Heart left ventricle (tissue), 16 donors: ENCODE measurements at regions of chr10 and their contacts with region 1.

Region 1: DNA sequence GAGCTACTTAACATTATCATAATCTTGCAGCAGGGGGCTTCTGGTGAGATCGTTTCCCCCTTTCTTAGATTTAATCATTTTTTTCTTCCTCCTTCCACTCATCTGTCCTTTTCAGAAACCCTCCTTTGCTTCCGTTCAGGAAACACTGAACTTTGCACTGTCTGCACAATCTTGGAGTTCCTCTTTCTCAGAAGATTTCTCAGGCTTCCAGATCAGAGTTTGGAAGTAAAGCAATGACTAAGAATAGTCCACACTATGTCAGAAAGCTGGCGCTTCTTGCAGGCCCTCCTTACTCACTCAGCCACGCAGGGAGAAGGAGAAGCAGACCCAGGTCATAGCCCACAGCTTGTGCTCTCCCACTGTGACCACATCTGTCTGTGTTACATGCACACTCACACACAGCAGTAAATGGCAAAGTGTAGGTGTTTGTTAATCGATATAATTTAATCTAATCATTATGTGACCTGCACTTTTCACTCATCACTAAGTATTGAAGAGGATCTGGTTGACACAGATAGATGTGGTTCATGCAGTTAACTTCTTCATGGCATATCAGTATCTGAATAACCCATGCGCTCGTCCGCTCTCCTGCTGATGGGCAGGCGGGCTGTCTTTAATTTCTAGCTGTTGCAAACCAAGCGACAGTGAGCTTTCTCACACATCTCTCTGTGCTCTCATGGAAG is 30.2 kb downstream of the ALOX5 start:
- DNase-seq: peak in 1 of 5 donors; percentile 33
- ATAC-seq: peak in 3 of 4 donors; percentile 61 to 90 (median 88)
- H3K4me3 ChIP-seq: no peak overlapping the region
- H3K27ac ChIP-seq: peak overlapping the region in 2 of 12 donors; percentile 18 to 80
- H3K4me1 ChIP-seq: peaks cover 0 to 40% (median 0%) of the 10 kb centered on the region in 12 donors
- H3K27me3 ChIP-seq: peaks cover 0 to 14% (median 0%) of the 10 kb centered on the region in 9 donors
- CTCF ChIP-seq: no peak
- POLR2A ChIP-seq: no peak

Region 2: GRCh38 chr10:45280113-45280760 is 124.0 kb before region 1 on chr10:
- intact Hi-C with region 1: loop called in 1 of 10 experiments (anchors 10 kb)
- DNase-seq: peak in 1 of 5 donors; percentile 10
- ATAC-seq: peak in 3 of 4 donors; percentile 20 to 83 (median 71)
- H3K4me3 ChIP-seq: no peak overlapping the region
- H3K27ac ChIP-seq: peak overlapping the region in 1 of 12 donors; percentile 9
- H3K4me1 ChIP-seq: peaks cover 0 to 15% (median 0%) of the 10 kb centered on the region in 12 donors
- H3K27me3 ChIP-seq: peaks cover 0 to 4% (median 0%) of the 10 kb centered on the region in 9 donors
- CTCF ChIP-seq: no peak
- POLR2A ChIP-seq: no peak

Region 3: DNA sequence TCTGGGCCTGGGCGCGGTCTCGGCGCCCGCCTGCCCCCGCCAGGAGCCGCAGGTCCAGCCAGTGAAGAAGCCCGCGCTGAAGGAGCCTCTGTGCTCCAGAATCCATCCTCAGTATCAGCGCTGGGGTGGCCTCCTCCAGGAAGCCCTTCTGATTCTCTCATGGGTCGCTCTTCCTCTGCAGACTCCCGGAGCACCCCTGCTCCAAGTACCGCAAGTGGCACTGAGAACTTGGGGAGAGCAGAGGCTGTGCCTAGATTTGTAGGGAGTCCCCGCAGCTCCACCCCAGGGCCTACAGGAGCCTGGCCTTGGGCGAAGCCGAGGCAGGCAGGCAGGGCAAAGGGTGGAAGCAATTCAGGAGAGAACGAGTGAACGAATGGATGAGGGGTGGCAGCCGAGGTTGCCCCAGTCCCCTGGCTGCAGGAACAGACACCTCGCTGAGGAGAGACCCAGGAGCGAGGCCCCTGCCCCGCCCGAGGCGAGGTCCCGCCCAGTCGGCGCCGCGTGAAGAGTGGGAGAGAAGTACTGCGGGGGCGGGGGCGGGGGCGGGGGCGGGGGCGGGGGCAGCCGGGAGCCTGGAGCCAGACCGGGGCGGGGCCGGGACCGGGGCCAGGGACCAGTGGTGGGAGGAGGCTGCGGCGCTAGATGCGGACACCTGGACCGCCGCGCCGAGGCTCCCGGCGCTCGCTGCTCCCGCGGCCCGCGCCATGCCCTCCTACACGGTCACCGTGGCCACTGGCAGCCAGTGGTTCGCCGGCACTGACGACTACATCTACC is 30.5 kb before region 1 on chr10 and contains the start of gene ALOX5:
- intact Hi-C with region 1: loop called in 1 of 10 experiments (anchors 2 kb)
- DNase-seq: peak; percentile 68 to 90 (median 73)
- ATAC-seq: peak; percentile 58 to 85 (median 84)
- H3K4me3 ChIP-seq: peak within 1 kb of the TSS; percentile 30 to 75 (median 47)
- H3K27ac ChIP-seq: peak within 1 kb of the TSS in 3 of 12 donors; percentile 16 to 81 (median 21)
- H3K4me1 ChIP-seq: peaks cover 0 to 51% (median 17%) of the 10 kb centered on the region in 12 donors
- H3K27me3 ChIP-seq: peaks cover 0 to 52% (median 34%) of the 10 kb centered on the region in 9 donors
- CTCF ChIP-seq: no peak
- POLR2A ChIP-seq: no peak
- total RNA-seq, gene ALOX5: 1.3 to 36.1 (median 5.8) TPM

Region 4: GRCh38 chr10:45491091-45491490 is 86.9 kb after region 1 on chr10:
- intact Hi-C with region 1: no loop called
- DNase-seq: no peak
- ATAC-seq: no peak
- H3K4me3 ChIP-seq: no peak overlapping the region
- H3K27ac ChIP-seq: no peak overlapping the region
- H3K4me1 ChIP-seq: no peaks in the 10 kb centered on the region
- H3K27me3 ChIP-seq: no peaks in the 10 kb centered on the region
- CTCF ChIP-seq: no peak
- POLR2A ChIP-seq: no peak